HepG2 (cell line): ENCODE measurements at regions of chr19 and their contacts with region 1.

Region 1: DNA sequence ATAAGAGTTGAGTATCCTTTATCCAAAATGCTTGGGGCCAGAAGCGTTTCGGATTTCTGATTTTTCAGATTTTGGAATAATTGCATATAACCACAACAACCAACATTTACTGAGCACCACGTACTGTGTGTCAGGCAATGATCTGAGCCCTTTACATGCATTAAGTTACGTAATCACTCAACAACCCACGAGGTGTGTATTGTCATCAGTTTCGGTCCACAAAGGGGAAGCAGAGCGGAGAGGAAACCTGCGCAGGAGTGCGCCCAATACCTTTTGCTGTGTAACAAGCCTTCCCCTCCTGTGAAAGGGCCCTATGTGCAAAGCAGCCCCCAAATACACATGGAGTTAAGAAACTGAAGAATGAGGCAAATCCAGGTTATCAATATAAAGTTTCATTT is 20.7 kb upstream of the NLRP12 start:
- DNase-seq: no peak
- ATAC-seq: no peak
- H3K4me3 ChIP-seq: no peak overlapping the region
- H3K27ac ChIP-seq: no peak overlapping the region
- H3K4me1 ChIP-seq: peaks cover 42% of the 10 kb centered on the region
- H3K27me3 ChIP-seq: no peaks in the 10 kb centered on the region
- CTCF ChIP-seq: no peak
- EP300 ChIP-seq: no peak
- POLR2A ChIP-seq: no peak
- RAD21 ChIP-seq: no peak

Region 2: DNA sequence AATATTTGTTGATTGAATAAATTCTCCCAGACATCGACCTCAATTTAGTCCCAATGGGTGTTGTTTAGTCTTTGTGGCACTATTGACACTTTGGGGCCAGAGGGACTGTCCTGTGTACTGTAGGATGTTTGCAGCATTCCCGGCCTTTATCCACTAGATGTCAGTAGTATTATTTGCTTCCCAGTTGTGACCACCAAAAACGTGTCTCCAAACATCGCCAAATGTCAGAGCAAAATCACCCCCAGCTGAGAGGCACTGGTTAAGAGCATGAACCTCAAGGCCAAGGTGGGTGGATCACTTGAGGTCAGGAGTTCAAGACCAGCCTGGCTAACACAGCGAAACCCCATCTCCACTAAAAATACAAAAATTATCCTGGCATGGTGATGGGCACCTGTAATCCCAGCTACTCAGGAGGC is 36.1 kb before region 1 on chr19:
- CTCF ChIA-PET with region 1: interaction called, 4 read pairs
- POLR2A ChIA-PET with region 1: no interaction called
- in situ Hi-C with region 1: no loop called
- intact Hi-C with region 1: loop called (anchors 5 kb)
- DNase-seq: peak; percentile 68
- ATAC-seq: peak; percentile 88
- H3K4me3 ChIP-seq: no peak overlapping the region
- H3K27ac ChIP-seq: no peak overlapping the region
- H3K4me1 ChIP-seq: peaks cover 24% of the 10 kb centered on the region
- H3K27me3 ChIP-seq: peaks cover 0 to 1% of the 10 kb centered on the region in 2 experiments; a peak in 1 of 5 replicates
- CTCF ChIP-seq: peak; percentile 84
- EP300 ChIP-seq: no peak
- POLR2A ChIP-seq: no peak
- RAD21 ChIP-seq: peak; percentile 50; the same call in 1 of the 2 replicates

Region 3: GRCh38 chr19:53818756-53819155 is 26.1 kb before region 1 on chr19:
- CTCF ChIA-PET with region 1: no interaction called
- POLR2A ChIA-PET with region 1: no interaction called
- in situ Hi-C with region 1: no loop called
- intact Hi-C with region 1: no loop called
- DNase-seq: no peak
- ATAC-seq: no peak
- H3K4me3 ChIP-seq: no peak overlapping the region
- H3K27ac ChIP-seq: no peak overlapping the region
- H3K4me1 ChIP-seq: peaks cover 4% of the 10 kb centered on the region
- H3K27me3 ChIP-seq: peaks cover 0 to 4% of the 10 kb centered on the region in 2 experiments; a peak in 1 of 5 replicates
- CTCF ChIP-seq: no peak
- EP300 ChIP-seq: no peak
- POLR2A ChIP-seq: no peak
- RAD21 ChIP-seq: no peak

Region 4: GRCh38 chr19:53867225-53868090 is 22.6 kb after region 1 on chr19 and contains the start of gene MYADM:
- CTCF ChIA-PET with region 1: no interaction called
- POLR2A ChIA-PET with region 1: interaction called, 10 read pairs
- in situ Hi-C with region 1: no loop called
- intact Hi-C with region 1: no loop called
- DNase-seq: peak; percentile 98
- ATAC-seq: peak; percentile 33
- H3K4me3 ChIP-seq: peak within 1 kb of the TSS; percentile 79 to 99 (median 99)
- H3K27ac ChIP-seq: peak within 1 kb of the TSS; percentile 100
- H3K4me1 ChIP-seq: peaks cover 32% of the 10 kb centered on the region
- H3K27me3 ChIP-seq: no peaks in the 10 kb centered on the region; a peak in 1 of 5 replicates
- CTCF ChIP-seq: no peak; the same call in 1 of the 2 replicates
- EP300 ChIP-seq: peak; percentile 73 to 90
- POLR2A ChIP-seq: peak; percentile 83 to 89
- RAD21 ChIP-seq: no peak; the same call in 1 of the 2 replicates
- total RNA-seq, gene MYADM: 12.4 and 19.9 TPM in 2 replicates

Region 5: DNA sequence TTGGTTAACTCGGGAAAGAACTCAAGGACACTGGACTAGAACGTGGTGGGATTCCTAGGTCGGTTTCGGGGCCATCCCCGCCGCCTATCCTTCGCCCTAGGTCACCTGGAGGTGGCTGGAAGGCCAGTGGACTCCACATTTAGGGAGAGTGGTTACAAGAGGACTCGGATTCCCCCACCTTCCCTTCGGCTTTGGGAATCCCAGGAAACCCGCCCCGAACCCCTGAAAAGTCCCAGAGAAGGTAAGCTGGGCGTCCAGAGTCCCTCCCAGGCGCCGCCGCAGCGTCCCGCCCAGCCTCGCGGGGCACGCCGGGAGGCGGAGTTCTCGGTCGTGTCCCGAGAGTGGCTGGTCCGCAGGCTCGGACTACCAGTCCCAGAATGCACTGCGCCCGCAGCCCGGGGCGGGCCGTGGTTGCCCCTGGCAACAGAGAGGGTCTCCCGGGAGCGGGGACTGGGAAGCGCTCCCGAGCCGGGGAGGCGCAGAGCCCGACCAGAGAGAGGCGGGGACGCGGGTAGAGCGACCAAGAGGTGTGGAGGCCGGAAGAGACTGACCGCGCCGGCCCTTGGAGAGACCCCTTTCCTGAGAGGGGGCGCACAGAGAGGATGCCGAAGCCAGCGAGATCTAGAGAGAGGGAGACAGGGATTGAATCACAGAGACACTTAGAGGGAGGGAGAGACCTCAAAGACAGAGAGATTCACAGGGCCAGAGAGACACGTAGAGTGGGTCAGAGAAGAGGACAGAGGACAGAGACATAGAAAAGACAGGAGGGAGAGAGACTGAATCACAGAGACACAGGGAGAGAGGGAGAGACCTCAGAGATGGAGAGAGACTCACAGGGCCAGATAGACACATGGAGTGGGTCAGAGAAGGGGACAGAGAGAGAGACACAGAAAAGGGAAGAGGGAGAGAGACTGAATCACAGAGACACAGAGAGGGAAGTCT is 34.6 kb after region 1 on chr19:
- CTCF ChIA-PET with region 1: interaction called, 34 read pairs
- POLR2A ChIA-PET with region 1: interaction called, 4 read pairs
- in situ Hi-C with region 1: loop called (anchors 5 kb)
- intact Hi-C with region 1: loop called (anchors 2 kb)
- DNase-seq: peak; percentile 86
- ATAC-seq: peak; percentile 88
- H3K4me3 ChIP-seq: peak overlapping the region; percentile 64 to 84 (median 68)
- H3K27ac ChIP-seq: no peak overlapping the region
- H3K4me1 ChIP-seq: peaks cover 30% of the 10 kb centered on the region
- H3K27me3 ChIP-seq: peaks cover 0 to 28% of the 10 kb centered on the region in 2 experiments; a peak in 3 of 5 replicates
- CTCF ChIP-seq: no peak
- EP300 ChIP-seq: no peak
- POLR2A ChIP-seq: no peak
- RAD21 ChIP-seq: no peak

Region 6: DNA sequence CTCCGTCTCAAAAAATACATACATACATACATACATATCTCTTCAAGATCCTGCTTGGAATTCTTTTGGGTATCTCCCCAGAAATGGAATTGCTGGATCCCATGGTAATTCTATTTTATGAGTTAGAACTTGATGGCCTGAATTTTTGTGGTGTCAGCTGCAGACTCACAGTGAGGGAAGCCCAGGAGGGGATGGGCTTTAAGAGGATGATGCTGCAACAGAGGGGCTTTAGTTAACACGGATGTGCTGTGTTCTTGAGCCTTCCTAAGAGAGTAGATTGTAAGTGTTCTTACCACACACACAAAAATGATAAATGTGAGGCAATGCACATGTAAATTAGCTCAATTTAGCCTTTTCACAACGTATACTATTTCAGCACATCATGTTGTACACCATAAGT is 178.3 kb after region 1 on chr19:
- CTCF ChIA-PET with region 1: interaction called, 28 read pairs
- POLR2A ChIA-PET with region 1: no interaction called
- in situ Hi-C with region 1: no loop called
- intact Hi-C with region 1: no loop called
- DNase-seq: no peak
- ATAC-seq: no peak
- H3K4me3 ChIP-seq: no peak overlapping the region
- H3K27ac ChIP-seq: no peak overlapping the region
- H3K4me1 ChIP-seq: peaks cover 43% of the 10 kb centered on the region
- H3K27me3 ChIP-seq: no peaks in the 10 kb centered on the region
- CTCF ChIP-seq: no peak
- EP300 ChIP-seq: no peak
- POLR2A ChIP-seq: no peak
- RAD21 ChIP-seq: no peak

Region 7: DNA sequence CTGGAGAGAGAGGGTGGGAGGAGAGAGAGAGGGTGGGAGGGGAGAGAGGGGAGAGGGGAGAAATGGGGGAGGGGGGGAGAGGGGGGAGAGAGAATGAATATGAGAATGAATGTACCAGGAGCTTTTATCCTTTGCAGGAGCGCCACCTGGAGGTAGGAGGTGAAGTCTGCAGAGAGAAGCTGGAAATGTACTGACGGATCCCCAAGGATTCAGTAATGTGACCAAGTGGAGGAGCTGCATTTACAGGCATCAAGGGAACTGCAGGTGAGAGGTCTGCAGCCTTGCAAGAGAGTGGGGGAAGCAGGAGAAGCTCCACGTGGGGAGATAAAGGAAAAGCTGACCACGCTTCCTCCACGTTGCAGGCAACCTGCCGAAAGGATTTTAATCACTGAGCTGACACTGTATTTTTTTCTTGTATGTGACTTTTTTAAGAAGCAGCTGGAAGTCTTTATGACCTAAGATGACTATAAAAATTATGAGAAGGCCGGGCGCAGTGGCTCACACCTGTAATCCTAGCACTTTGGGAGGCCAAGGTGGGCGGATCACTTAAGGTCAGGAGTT is 185.2 kb after region 1 on chr19:
- CTCF ChIA-PET with region 1: interaction called, 28 read pairs
- POLR2A ChIA-PET with region 1: no interaction called
- in situ Hi-C with region 1: no loop called
- intact Hi-C with region 1: loop called (anchors 1 kb)
- DNase-seq: peak; percentile 72
- ATAC-seq: peak; percentile 77
- H3K4me3 ChIP-seq: no peak overlapping the region
- H3K27ac ChIP-seq: no peak overlapping the region
- H3K4me1 ChIP-seq: peaks cover 17% of the 10 kb centered on the region
- H3K27me3 ChIP-seq: no peaks in the 10 kb centered on the region; a peak in 2 of 5 replicates
- CTCF ChIP-seq: peak; percentile 79
- EP300 ChIP-seq: no peak
- POLR2A ChIP-seq: no peak
- RAD21 ChIP-seq: no peak